Posterior vena cava (tissue), 2 donors: ENCODE measurements at regions of chr19 and their contacts with region 1.

Region 1: GRCh38 chr19:52139252-52140031 is at the start of gene ZNF616:
- DNase-seq: peak; percentile 99
- total RNA-seq, gene ZNF616: 9.6 to 11.2 TPM

Region 2: GRCh38 chr19:52237771-52238400 is 98.4 kb after region 1 on chr19:
- intact Hi-C with region 1: loop called (anchors 2 to 10 kb)
- DNase-seq: no peak

Region 3: DNA sequence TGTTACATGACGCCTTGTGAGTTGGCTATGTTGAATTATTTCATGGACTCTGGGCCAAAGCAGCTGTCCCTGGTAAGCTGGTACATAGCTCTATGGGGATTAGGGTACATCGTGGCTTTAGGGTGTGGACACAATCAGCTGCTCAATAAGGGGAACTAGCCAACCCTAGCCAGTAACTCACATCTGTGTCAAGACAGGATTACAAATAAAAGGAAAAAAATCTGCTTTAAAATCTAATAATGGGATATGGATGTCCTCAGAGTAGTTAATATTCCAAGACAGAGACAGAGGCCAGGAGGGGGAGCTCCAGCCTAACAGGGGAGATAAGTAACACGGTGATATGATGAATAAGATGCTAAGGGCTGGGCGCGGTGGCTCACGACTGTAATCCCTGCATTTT is 108.8 kb after region 1 on chr19:
- intact Hi-C with region 1: loop called in 1 of 2 experiments (anchors 10 kb)
- DNase-seq: peak; percentile 83